Activated CD4-positive, alpha-beta T cell treated with anti-CD3 and anti-CD28 coated beads, Interleukin-2, amount 10 ng/mL, durations not matched to agents 24 days and 14 days (primary cell): ENCODE measurements at regions of chr7 and their contacts with region 1.

Region 1: DNA sequence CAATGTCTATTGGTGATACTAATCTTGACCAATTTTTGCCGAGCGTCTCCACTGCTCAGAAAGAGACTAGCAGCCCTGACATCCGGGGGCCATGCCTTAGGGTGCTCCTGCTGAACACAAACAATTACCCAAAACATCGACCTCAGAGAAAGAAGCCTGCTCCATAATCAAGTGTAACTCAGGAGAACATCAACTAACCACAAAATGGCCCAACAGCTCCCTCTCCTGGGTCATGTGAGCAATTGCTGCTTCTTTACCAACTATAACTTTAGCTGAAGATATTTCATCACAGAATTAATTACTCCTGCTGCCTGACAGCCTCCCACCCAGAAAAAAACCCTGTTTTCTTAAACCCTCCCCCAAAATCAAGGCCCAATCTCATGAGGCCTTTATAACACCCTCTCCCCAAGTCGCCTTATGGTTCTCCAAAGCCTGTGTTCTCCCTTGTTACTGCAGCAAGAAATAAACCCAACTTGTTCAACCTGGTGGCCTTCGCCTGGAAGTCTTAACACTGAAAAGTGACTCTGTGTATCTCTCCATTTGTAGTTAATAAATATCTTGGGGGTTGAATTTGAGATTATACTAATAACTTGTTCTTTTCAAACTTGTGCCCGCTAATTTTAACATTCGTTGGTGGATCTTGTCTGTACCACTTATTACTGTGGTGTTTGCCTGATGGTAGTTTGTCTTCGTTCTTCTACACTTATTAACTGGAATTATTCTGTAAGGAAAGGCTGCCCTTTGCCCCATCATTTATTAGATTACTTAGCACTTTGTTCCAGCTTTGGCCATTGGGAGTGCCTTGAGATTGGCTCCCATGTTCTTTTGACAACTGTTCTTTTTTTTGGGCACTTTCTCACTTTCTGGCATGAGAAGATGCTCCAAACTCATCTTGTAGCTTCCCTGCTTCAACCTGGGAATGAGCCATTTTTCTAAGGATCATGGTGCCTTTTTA is 21.2 kb upstream of the RAMP3 start:
- DNase-seq: peak; percentile 91
- H3K4me3 Mint-ChIP-seq: no peak overlapping the region
- H3K27ac Mint-ChIP-seq: no peak overlapping the region
- H3K4me1 Mint-ChIP-seq: peaks cover 16% of the 10 kb centered on the region
- H3K27me3 Mint-ChIP-seq: peaks cover 2% of the 10 kb centered on the region

Region 2: GRCh38 chr7:44587843-44588711 is 548.3 kb before region 1 on chr7:
- intact Hi-C with region 1: loop called (anchors 2 kb)
- DNase-seq: peak; percentile 90
- H3K4me3 Mint-ChIP-seq: no peak overlapping the region
- H3K27ac Mint-ChIP-seq: no peak overlapping the region
- H3K4me1 Mint-ChIP-seq: peaks cover 15% of the 10 kb centered on the region
- H3K27me3 Mint-ChIP-seq: peaks cover 3% of the 10 kb centered on the region

Region 3: DNA sequence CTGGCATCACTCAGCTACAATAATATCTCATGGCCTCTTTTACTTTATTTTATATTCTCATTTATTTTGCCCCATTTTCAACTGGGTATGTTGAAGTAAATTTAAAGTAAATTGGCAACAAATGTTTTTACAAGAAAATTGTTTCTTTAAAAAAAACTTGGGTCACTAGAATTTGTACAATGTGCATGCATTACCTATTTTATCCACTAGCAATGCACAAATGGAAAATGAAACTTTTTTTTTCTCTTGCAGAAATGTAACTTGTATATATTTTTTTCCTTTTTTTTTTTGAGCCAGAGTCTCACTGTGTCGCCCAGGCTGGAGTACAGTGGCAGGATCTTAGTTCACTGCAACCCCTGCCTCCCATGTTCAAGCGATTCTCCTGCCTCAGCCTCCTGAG is 278.2 kb before region 1 on chr7:
- intact Hi-C with region 1: loop called (anchors 5 kb)
- DNase-seq: no peak
- H3K4me3 Mint-ChIP-seq: no peak overlapping the region
- H3K27ac Mint-ChIP-seq: no peak overlapping the region
- H3K4me1 Mint-ChIP-seq: peaks cover 15% of the 10 kb centered on the region
- H3K27me3 Mint-ChIP-seq: peaks cover 3% of the 10 kb centered on the region

Region 4: DNA sequence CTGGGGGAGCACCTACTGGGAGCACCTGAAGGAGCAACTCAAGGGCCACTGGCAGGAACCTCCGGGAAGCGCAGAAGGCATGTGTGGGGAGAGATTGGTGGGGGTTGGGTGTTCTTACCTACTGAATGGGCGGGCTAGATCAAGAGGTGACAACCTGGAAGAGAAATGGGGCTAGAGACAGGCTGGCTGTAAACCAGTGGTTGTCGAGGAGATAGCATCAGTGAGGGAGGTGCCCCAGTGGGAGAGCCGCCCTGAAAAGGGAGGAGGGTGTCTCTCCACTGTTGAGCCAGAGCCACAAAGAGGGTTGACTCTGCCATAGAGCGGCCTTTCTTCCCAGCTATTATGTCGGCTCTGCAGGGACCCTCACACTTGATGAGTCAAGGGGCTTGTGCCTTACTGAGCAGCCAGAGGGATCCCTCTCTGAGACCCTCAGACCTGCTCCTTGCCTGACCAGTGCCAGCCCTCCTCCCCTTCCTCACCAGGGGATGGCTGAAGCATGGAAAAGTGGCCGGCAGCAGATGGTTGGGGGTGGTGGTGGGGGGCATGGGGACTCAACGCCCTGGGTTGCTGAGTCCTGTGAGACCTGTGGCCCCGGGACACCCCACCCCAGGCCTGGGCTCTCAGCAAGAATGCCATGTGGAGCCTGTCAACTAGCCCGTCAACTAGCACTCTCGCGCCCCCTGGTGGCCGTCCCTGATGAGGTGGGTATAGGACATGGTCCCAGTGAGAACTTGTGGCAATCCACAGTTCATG is 214.6 kb before region 1 on chr7:
- intact Hi-C with region 1: loop called (anchors 5 kb)
- DNase-seq: peak; percentile 98
- H3K4me3 Mint-ChIP-seq: no peak overlapping the region
- H3K27ac Mint-ChIP-seq: peak overlapping the region; percentile 81
- H3K4me1 Mint-ChIP-seq: peaks cover 12% of the 10 kb centered on the region
- H3K27me3 Mint-ChIP-seq: peaks cover under 1% of the 10 kb centered on the region

Region 5: GRCh38 chr7:44973610-44974401 is 162.6 kb before region 1 on chr7:
- intact Hi-C with region 1: loop called (anchors 1 kb)
- DNase-seq: peak; percentile 90
- H3K4me3 Mint-ChIP-seq: peak overlapping the region; percentile 93
- H3K27ac Mint-ChIP-seq: peak overlapping the region; percentile 56
- H3K4me1 Mint-ChIP-seq: peaks cover 30% of the 10 kb centered on the region
- H3K27me3 Mint-ChIP-seq: no peaks in the 10 kb centered on the region